Activated T-helper 2 cell treated with anti-CD3 and anti-CD28 coated beads, Interferon-gamma antibody, Interleukin-2, Interleukin-4, amounts not matched to agents 10 μg/mL and 5 μg/mL and 100 μg/mL, durations not matched to agents 14 hours and 24 hours and 36 hours (primary cell): ENCODE measurements at regions of chr12 and their contacts with region 1.

Region 1: GRCh38 chr12:132153501-132154340 is 9.5 kb downstream of the NOC4L start:
- DNase-seq: peak; percentile 64
- H3K4me3 Mint-ChIP-seq: no peak overlapping the region
- H3K27ac Mint-ChIP-seq: no peak overlapping the region
- H3K4me1 Mint-ChIP-seq: no peaks in the 10 kb centered on the region
- H3K27me3 Mint-ChIP-seq: no peaks in the 10 kb centered on the region

Region 2: DNA sequence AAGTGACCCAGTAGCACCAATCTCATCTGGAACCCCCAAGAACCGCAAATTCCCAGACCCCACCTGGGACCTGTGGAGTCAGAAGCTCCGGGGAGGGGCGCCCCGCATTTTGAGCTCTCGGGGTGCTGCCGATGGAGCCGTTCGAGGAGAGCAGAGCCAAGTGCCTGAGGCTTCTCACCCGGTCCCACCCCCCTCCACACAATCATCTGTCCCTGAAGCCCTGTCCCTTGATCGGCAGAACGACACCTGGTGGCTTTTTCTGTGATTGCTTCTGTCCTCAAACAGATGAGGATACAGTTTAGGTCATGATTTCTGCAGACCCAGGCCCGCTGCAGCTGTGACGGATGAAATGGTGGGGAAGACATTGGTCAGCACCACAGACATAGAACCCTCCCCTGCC is 65.2 kb after region 1 on chr12:
- intact Hi-C with region 1: loop called (anchors 1 kb)
- DNase-seq: peak; percentile 17
- H3K4me3 Mint-ChIP-seq: no peak overlapping the region
- H3K27ac Mint-ChIP-seq: no peak overlapping the region
- H3K4me1 Mint-ChIP-seq: peaks cover 5% of the 10 kb centered on the region
- H3K27me3 Mint-ChIP-seq: no peaks in the 10 kb centered on the region

Region 3: DNA sequence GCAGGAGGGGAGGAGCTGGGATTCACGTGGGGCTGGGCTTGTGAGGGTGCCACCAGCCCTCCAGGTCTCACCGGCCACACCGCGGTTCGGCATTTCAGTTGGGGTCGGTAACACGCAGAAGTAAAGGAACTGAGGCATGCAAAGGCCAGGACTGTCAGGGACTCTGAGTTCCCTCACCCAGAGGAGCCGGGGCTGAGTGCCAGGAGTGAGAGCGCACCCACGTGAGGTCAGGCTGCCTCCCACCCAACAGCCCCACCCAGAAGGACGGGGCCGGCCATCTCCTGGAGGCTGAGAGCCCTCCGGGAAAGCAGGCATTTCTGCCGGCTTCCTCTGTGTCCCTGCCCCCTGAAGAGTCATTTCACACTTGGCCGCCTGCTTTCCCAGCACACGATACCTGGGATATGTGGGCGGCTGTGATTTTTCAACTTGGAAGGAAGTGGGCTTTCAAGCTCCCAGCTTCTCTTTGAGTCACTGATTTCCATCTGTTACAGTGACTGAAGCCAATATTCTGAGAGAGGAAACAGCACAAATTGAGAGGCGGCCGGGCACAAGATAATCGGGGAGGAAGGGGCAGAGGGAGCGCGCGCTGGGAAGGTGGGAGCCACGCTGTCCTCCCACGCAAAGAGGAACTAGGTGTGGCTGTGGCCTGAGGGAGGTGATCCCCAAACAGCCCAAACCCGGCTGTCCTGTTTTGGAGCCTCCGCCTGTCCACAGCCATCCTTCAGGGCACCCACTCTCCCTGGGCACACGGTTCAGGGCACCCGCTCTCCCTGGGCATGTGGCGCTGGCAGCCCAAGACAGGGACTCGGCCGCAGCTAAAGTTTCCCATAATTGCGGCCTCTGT is 156.7 kb after region 1 on chr12:
- intact Hi-C with region 1: no loop called
- DNase-seq: no peak
- H3K4me3 Mint-ChIP-seq: no peak overlapping the region
- H3K27ac Mint-ChIP-seq: no peak overlapping the region
- H3K4me1 Mint-ChIP-seq: no peaks in the 10 kb centered on the region
- H3K27me3 Mint-ChIP-seq: no peaks in the 10 kb centered on the region

Region 4: GRCh38 chr12:132560614-132561426 is 407.1 kb after region 1 on chr12:
- intact Hi-C with region 1: loop called (anchors 5 kb)
- DNase-seq: peak; percentile 60
- H3K4me3 Mint-ChIP-seq: peak overlapping the region; percentile 71
- H3K27ac Mint-ChIP-seq: no peak overlapping the region
- H3K4me1 Mint-ChIP-seq: peaks cover 8% of the 10 kb centered on the region
- H3K27me3 Mint-ChIP-seq: peaks cover 6% of the 10 kb centered on the region